Right ventricle myocardium inferior (tissue), 1 donor: ENCODE measurements at regions of chr19 and their contacts with region 1.

Region 1: DNA sequence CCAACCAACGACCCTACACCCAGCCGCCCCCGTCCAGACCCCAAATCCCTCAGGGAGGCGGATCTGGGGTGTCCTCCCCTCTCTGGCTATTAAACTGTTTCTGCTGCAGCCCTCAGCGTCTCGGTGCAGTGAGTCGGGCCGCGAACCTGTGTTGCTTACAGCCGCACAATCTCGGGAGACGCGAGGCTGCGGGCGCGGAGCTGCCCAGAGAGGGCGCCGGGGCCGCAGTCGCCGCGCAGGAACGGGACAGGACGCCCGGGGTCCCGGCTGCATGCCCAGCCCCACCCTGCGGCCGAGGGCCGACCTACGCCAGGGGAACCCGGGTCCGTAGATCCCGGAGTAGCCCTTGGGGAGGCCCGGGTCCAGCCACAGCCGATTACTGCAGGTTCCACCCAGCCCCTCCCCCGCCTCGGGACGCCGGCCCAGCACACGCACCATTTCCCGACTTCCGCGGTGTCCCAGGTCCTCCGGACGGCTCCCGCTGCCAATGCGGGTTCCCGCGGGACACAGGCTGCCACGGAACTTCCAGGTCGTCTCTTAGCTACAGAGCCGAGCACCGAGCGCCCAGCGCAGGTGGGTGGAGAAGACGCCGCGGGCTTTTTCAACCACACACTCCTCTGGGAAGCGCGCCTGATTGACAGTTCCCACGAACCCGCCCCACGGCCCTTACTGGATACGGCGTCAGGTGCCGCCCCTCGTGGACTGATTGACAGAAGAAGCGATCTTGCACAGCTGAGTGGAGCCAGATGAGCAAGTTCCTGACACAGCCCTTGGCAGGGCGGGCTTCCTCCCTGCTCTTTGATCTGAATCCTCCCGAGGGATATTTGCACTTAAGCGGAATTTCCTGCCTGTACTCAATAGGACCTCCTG is at the start of gene ZNF799:
- DNase-seq: peak; percentile 99
- ATAC-seq: peak; percentile 100
- total RNA-seq, gene ZNF799: 2.3 TPM

Region 2: GRCh38 chr19:12162882-12163806 is 237.7 kb before region 1 on chr19 and contains the start of gene ZNF136:
- intact Hi-C with region 1: loop called (anchors 5 kb)
- DNase-seq: peak; percentile 97
- ATAC-seq: peak; percentile 99
- total RNA-seq, gene ZNF136: 3.8 TPM

Region 3: DNA sequence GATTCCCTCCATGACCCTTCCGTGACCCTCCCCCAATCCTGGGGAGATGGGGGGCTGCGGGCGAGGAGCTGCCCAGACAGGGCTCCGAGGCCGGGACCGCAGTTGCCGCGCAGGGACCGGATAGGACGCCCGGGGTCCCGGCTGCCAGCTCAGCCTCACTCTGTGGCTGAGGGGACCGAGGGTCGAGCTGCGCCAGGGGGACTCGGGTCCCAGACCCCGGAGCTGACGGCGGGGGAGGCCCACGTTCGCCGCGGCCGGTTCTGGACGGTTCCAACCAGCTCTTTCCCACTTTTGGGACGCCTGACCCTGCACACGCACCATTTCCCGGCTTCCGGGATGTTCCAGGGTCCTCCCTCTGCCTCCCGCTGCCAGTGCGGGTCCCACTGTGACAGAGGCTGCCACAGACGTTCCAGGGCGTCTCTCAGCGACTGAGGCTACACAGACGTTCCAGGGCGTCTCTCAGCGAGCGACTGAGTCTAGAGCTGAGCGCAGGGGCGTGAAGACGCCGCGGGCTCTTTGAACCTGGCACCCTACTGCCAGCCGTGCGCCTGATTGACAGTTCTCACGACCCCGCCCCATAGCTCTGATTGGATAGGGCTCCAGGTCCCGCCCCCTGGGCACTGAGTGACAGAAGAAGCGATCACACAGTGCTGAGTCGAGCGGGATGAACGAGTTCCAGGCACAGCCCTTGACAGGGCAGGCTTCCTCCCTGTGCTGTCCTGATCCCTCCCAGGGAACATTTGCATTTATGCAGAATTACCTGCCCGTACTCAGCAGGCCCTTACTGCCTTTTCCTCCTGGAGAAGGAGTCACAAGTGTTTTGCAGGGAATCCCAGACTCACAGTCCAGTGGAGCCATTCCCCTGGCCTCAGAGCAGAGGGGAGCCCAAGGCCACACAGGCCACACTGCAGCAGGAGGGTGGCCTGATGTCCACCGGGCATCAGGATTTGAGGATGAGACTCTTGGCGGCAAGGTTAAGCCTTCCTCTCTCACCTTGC is 67.4 kb before region 1 on chr19 and contains the start of gene ZNF563:
- intact Hi-C with region 1: loop called (anchors 2 kb)
- DNase-seq: peak; percentile 97
- ATAC-seq: peak; percentile 99
- total RNA-seq, gene ZNF563: 5.3 TPM

Region 4: GRCh38 chr19:12365236-12366162 is 35.4 kb before region 1 on chr19 and contains the start of gene ZNF442:
- intact Hi-C with region 1: loop called (anchors 2 kb)
- DNase-seq: peak; percentile 95
- ATAC-seq: peak; percentile 99
- total RNA-seq, gene ZNF442: 2.4 TPM

Region 5: GRCh38 chr19:12551060-12551832 is 150.4 kb after region 1 on chr19 and contains the start of gene ZNF564:
- intact Hi-C with region 1: loop called (anchors 5 kb)
- DNase-seq: peak; percentile 95
- ATAC-seq: peak; percentile 99
- total RNA-seq, gene ZNF564: 10.3 TPM

Region 6: GRCh38 chr19:12696366-12697335 is 295.8 kb after region 1 on chr19 and contains the start of gene FBXW9:
- intact Hi-C with region 1: no loop called
- DNase-seq: peak; percentile 98
- ATAC-seq: peak; percentile 94
- total RNA-seq, gene FBXW9: 1.7 TPM